ENCODE measurements at regions of chr9 and their contacts with region 1.

Region 1: DNA sequence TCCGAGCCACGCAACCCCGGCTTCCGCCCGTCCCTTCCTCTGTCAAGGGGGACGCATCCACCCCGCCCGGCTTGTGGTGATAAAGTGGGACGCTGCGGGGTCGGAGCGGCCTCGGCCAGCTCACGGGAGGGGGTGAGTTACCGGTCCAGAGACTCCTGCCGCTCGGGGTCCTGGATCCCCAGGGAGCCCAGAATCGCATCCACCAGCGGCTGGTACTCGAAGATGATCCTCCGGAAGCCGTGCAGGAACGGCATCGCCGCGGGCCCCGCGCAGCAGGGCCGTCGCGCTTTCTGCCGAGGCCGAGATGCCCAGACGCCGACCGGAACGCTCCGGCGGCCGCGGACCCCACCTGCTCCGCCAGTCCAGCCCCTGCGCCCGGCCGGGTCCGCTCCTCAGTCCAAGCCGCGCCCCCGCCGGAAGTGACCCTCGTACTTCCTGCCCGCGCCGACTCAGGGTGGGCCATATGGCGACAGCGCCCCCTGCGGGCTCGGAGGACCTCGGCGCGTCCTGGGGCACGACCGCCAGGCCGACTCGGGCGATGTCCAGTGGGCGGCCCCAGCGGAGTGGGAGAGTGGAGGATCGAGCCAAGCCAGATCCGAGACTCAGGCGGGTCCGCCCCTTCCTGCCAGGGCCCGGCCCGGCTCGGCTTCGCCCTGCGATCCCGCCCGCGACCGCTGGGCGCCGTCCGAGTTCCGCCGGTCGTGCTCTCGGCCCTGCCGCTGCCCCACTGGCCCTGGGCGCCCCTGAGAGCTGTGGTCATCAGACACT is at the start of gene ASB6:
- DNase-seq: peak; percentile 92
- H3K4me3 ChIP-seq: peak within 1 kb of the TSS; percentile 83 to 93
- H3K27ac ChIP-seq: peak within 1 kb of the TSS; percentile 79
- H3K4me1 ChIP-seq: peaks cover 15% of the 10 kb centered on the region
- H3K27me3 ChIP-seq: no peaks in the 10 kb centered on the region
- CTCF ChIP-seq: peak; percentile 99 to 100 (median 100)
- POLR2A ChIP-seq: peak; percentile 50
- total RNA-seq, gene ASB6: 25.2 to 50.3 TPM

Region 2: GRCh38 chr9:129726322-129727160 is 84.6 kb after region 1 on chr9:
- intact Hi-C with region 1: loop called (anchors 2 kb)
- DNase-seq: peak; percentile 53
- H3K4me3 ChIP-seq: no peak overlapping the region
- H3K27ac ChIP-seq: peak overlapping the region; percentile 46 to 57
- H3K4me1 ChIP-seq: no peaks in the 10 kb centered on the region
- H3K27me3 ChIP-seq: no peaks in the 10 kb centered on the region
- CTCF ChIP-seq: peak; percentile 37 to 83 (median 65)
- POLR2A ChIP-seq: no peak

Region 3: DNA sequence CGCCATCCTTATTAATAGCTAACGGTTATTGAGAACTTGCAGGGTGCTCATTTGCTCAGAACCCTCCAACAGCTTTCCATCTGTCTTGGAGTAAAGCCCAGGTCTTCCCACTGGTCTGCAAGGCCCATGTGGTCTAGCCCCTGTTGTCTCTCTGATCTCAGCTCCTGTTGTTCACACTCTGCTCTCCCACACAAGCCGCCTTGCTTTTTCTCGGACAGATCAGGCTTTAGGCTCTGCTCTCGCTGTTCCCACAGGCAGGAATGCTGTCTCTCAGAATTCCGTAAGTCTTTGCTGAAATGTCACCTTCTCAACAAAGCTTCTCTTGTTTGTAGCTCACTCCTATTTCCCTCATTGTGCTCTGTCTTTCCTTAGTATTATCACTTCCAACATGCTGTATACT is 446.1 kb after region 1 on chr9:
- intact Hi-C with region 1: no loop called
- DNase-seq: no peak
- H3K4me3 ChIP-seq: no peak overlapping the region
- H3K27ac ChIP-seq: no peak overlapping the region
- H3K4me1 ChIP-seq: no peaks in the 10 kb centered on the region
- H3K27me3 ChIP-seq: no peaks in the 10 kb centered on the region
- CTCF ChIP-seq: no peak
- POLR2A ChIP-seq: no peak

Region 4: GRCh38 chr9:130235897-130236668 is 594.2 kb after region 1 on chr9:
- intact Hi-C with region 1: no loop called
- DNase-seq: peak; percentile 46
- H3K4me3 ChIP-seq: no peak overlapping the region
- H3K27ac ChIP-seq: peak overlapping the region; percentile 50 to 58
- H3K4me1 ChIP-seq: no peaks in the 10 kb centered on the region
- H3K27me3 ChIP-seq: no peaks in the 10 kb centered on the region
- CTCF ChIP-seq: peak; percentile 96 to 100 (median 98)
- POLR2A ChIP-seq: no peak